ENCODE measurements at regions of chr10 and their contacts with region 1.

Region 1: GRCh38 chr10:43689955-43690771 is 41.5 kb upstream of the ZNF32 start:
- DNase-seq: peak; percentile 67 to 90 (median 82)
- ATAC-seq: peak; percentile 99
- H3K4me3 ChIP-seq: peak overlapping the region; percentile 76
- H3K4me3 Mint-ChIP-seq: peak overlapping the region; percentile 88
- H3K27ac ChIP-seq: no peak overlapping the region
- H3K27ac Mint-ChIP-seq: no peak overlapping the region
- H3K4me1 ChIP-seq: peaks cover 14% of the 10 kb centered on the region
- H3K4me1 Mint-ChIP-seq: peaks cover 6% of the 10 kb centered on the region
- H3K27me3 ChIP-seq: peaks cover 7 to 12% of the 10 kb centered on the region in 2 experiments
- H3K27me3 Mint-ChIP-seq: peaks cover 26% of the 10 kb centered on the region
- CTCF ChIP-seq: peak; percentile 81

Region 2: DNA sequence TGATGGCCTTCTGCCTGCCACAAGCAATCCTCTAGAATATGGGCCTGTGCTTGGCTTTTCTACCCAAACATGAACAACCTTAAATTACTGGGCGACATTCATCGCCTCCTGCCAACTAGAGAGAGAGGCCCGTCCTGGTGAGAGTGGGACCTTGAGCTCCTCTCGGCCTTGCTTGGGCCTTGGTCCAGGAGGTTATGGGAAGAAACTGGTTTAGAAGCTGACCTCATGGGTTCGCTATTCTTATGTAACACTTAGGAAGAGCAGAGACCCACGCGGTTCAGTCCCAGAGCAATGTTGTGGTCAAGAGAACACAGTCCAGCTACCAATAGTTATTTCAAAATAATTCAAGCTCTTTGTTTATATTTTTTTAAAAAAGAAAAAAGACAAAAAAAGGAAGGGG is 134.8 kb after region 1 on chr10:
- CTCF ChIA-PET with region 1: no interaction called
- POLR2A ChIA-PET with region 1: no interaction called
- intact Hi-C with region 1: no loop called
- DNase-seq: no peak
- ATAC-seq: no peak
- H3K4me3 ChIP-seq: no peak overlapping the region
- H3K4me3 Mint-ChIP-seq: no peak overlapping the region
- H3K27ac ChIP-seq: no peak overlapping the region
- H3K27ac Mint-ChIP-seq: no peak overlapping the region
- H3K4me1 ChIP-seq: peaks cover 7% of the 10 kb centered on the region
- H3K4me1 Mint-ChIP-seq: peaks cover 20% of the 10 kb centered on the region
- H3K27me3 ChIP-seq: no peaks in the 10 kb centered on the region
- H3K27me3 Mint-ChIP-seq: no peaks in the 10 kb centered on the region
- CTCF ChIP-seq: no peak

Region 3: DNA sequence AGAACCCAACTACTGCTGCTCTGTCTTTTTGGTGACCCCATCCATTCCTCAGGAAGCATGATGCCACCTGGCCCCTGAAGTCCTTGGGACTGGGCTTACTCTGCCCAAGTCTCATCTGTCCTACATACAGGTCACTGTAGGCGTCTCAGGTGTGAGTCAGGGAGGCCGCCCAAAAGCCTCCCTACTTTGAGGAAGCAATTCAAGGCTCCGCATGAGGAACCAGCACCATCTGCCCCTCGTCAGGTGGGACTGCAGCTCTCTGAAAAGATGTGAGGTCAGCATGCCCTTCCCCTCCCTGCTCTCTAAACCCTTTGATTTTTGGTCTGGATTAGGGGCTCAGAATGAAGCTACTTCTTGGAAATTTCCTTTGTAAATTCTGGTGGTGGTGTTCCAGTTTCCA is 340.0 kb after region 1 on chr10:
- CTCF ChIA-PET with region 1: no interaction called
- POLR2A ChIA-PET with region 1: no interaction called
- intact Hi-C with region 1: loop called (anchors 1 to 5 kb)
- DNase-seq: peak in 10 of 14 experiments; percentile 3 to 57 (median 12)
- ATAC-seq: peak; percentile 54
- H3K4me3 ChIP-seq: no peak overlapping the region
- H3K4me3 Mint-ChIP-seq: no peak overlapping the region
- H3K27ac ChIP-seq: no peak overlapping the region
- H3K27ac Mint-ChIP-seq: no peak overlapping the region
- H3K4me1 ChIP-seq: no peaks in the 10 kb centered on the region
- H3K4me1 Mint-ChIP-seq: no peaks in the 10 kb centered on the region
- H3K27me3 ChIP-seq: no peaks in the 10 kb centered on the region
- H3K27me3 Mint-ChIP-seq: peaks cover 29% of the 10 kb centered on the region
- CTCF ChIP-seq: no peak

Region 4: DNA sequence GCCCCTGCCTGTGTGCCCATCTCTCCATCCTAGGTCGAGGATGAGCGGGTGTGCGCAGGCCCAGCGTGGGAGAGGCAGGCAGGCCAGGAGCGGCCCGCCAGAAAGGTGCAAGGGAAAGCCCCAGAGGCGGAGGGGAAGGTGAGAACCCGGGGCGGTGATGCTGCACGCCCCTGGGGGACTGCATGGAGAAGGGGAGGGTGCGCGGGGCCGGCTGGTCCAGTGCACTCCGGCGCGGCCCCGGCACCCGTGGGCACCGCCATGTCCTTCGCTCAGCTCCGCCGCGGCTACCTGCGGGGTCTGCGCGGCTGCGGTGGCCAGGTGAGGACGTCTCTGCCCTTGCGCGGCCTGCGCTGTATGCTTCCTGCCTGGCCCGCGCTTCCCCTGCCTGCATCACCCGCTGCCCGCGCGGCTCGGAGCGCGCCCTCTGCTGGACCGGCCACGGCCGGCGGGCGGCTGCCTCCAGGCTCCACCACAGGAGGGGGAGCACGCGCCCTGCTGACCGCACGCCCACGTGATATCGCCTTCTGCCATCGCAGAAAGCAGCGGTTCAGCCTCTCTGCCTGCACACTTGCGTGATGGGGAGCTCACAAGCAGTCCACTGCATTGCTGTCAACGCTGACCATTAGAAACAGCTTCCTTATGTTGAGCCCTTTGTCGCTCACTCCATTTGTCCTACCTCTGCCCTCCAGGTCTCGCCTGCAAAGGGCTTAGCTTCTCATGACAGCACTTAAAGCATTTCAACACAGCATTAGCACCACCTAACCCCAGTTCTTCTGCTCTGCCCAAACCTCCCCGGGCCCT is 620.8 kb after region 1 on chr10:
- CTCF ChIA-PET with region 1: no interaction called
- POLR2A ChIA-PET with region 1: no interaction called
- intact Hi-C with region 1: loop called in 1 of 2 experiments (anchors 5 kb)
- DNase-seq: peak; percentile 15 to 80 (median 50)
- ATAC-seq: peak; percentile 73
- H3K4me3 ChIP-seq: peak overlapping the region; percentile 22
- H3K4me3 Mint-ChIP-seq: no peak overlapping the region
- H3K27ac ChIP-seq: no peak overlapping the region
- H3K27ac Mint-ChIP-seq: no peak overlapping the region
- H3K4me1 ChIP-seq: peaks cover 14% of the 10 kb centered on the region
- H3K4me1 Mint-ChIP-seq: peaks cover 6% of the 10 kb centered on the region
- H3K27me3 ChIP-seq: no peaks in the 10 kb centered on the region
- H3K27me3 Mint-ChIP-seq: peaks cover 18% of the 10 kb centered on the region
- CTCF ChIP-seq: peak; percentile 49

Region 5: GRCh38 chr10:44386546-44387052 is 696.4 kb after region 1 on chr10:
- CTCF ChIA-PET with region 1: no interaction called
- POLR2A ChIA-PET with region 1: no interaction called
- intact Hi-C with region 1: loop called in 1 of 2 experiments (anchors 5 kb)
- DNase-seq: peak in 7 of 14 experiments; percentile 4 to 58 (median 18)
- ATAC-seq: no peak
- H3K4me3 ChIP-seq: no peak overlapping the region
- H3K4me3 Mint-ChIP-seq: no peak overlapping the region
- H3K27ac ChIP-seq: no peak overlapping the region
- H3K27ac Mint-ChIP-seq: no peak overlapping the region
- H3K4me1 ChIP-seq: peaks cover 3% of the 10 kb centered on the region
- H3K4me1 Mint-ChIP-seq: peaks cover 4% of the 10 kb centered on the region
- H3K27me3 ChIP-seq: peaks cover 27 to 53% of the 10 kb centered on the region in 2 experiments
- H3K27me3 Mint-ChIP-seq: peaks cover 54% of the 10 kb centered on the region
- CTCF ChIP-seq: peak; percentile 42

Region 6: DNA sequence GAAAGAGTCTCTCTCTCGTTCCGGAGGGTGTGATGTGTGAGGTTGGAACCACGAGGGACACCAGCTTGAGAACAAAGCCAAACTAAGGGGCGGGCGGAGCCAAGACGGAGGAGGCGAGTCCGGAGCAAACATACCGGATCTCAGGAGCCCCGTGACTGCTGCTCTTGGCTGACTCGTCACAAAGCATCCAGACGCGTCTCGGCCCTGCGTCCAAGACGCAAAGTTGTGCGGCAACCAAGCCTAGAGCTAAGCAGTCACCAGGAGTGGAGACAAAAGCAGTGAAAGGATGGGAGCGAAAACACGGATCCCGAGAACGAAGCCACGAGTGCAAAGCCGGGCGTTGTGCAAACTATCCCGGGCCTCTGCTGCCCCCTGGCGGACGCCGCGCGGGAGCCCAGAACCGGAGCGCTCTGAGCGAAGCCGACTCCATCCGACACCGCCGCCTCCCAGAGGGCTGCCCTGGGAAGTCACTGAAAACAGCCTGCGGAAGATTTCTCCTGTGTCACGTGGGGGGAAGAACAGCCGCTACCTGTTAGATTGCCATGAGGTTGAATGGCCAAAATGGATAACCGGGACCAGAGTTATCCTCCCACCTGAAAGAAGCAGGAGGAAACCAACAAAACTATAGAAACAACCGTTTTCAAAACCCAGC is 1174.6 kb after region 1 on chr10:
- CTCF ChIA-PET with region 1: interaction called, 5 read pairs
- POLR2A ChIA-PET with region 1: no interaction called
- intact Hi-C with region 1: loop called in 1 of 2 experiments (anchors 5 kb)
- DNase-seq: peak; percentile 60 to 90 (median 80)
- ATAC-seq: peak; percentile 73
- H3K4me3 ChIP-seq: peak overlapping the region; percentile 55
- H3K4me3 Mint-ChIP-seq: peak overlapping the region; percentile 87
- H3K27ac ChIP-seq: no peak overlapping the region
- H3K27ac Mint-ChIP-seq: no peak overlapping the region
- H3K4me1 ChIP-seq: peaks cover 17% of the 10 kb centered on the region
- H3K4me1 Mint-ChIP-seq: peaks cover 21% of the 10 kb centered on the region
- H3K27me3 ChIP-seq: peaks cover 22 to 30% of the 10 kb centered on the region in 2 experiments
- H3K27me3 Mint-ChIP-seq: peaks cover 70% of the 10 kb centered on the region
- CTCF ChIP-seq: peak; percentile 90

Measured in CD4-positive, alpha-beta T cell (primary cell).